Natural killer cell (primary cell): ENCODE measurements at regions of chr2 and their contacts with region 1.

Region 1: GRCh38 chr2:202265467-202266277 is at the start of gene NOP58:
- DNase-seq: peak; percentile 84 to 97
- ATAC-seq: peak; percentile 82 to 94 (median 90)
- H3K4me3 ChIP-seq: peak within 1 kb of the TSS; percentile 80
- H3K4me3 Mint-ChIP-seq: peak within 1 kb of the TSS; percentile 81
- H3K27ac ChIP-seq: peak within 1 kb of the TSS; percentile 99
- H3K27ac Mint-ChIP-seq: peak within 1 kb of the TSS; percentile 73 to 80
- H3K4me1 ChIP-seq: peaks cover 24% of the 10 kb centered on the region
- H3K4me1 Mint-ChIP-seq: peaks cover 7 to 16% of the 10 kb centered on the region in 2 donors
- H3K27me3 ChIP-seq: no peaks in the 10 kb centered on the region
- H3K27me3 Mint-ChIP-seq: no peaks in the 10 kb centered on the region
- CTCF ChIP-seq: no peak
- total RNA-seq, gene NOP58: 122 to 155 (median 124) TPM

Region 2: DNA sequence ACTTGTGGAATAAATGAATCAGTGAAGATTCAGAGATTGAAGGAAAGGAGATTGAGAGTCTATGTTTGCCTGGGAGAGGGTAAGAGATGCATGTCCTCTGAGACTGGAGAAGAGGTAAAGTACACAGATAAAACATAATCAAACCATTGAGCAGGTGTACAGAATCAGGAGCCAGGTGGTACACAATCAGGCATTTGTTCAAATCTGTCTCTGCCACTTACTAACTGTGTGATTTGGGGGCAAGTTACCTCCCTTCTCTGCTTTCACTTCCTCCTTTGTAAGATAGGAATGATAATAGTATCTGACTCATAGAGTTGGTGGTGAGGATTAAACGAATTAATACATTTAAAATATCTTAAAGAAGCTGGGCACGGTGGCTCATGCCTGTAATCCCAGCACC is 365.3 kb before region 1 on chr2:
- intact Hi-C with region 1: no loop called
- DNase-seq: no peak
- ATAC-seq: no peak
- H3K4me3 ChIP-seq: no peak overlapping the region
- H3K4me3 Mint-ChIP-seq: no peak overlapping the region
- H3K27ac ChIP-seq: no peak overlapping the region
- H3K27ac Mint-ChIP-seq: no peak overlapping the region
- H3K4me1 ChIP-seq: peaks cover 5% of the 10 kb centered on the region
- H3K4me1 Mint-ChIP-seq: no peaks in the 10 kb centered on the region
- H3K27me3 ChIP-seq: no peaks in the 10 kb centered on the region
- H3K27me3 Mint-ChIP-seq: peaks cover 24% of the 10 kb centered on the region in 2 donors
- CTCF ChIP-seq: no peak

Region 3: GRCh38 chr2:202238234-202239197 is 27.2 kb before region 1 on chr2 and contains the start of gene SUMO1:
- intact Hi-C with region 1: loop called (anchors 1 kb)
- DNase-seq: peak; percentile 83 to 96
- ATAC-seq: peak; percentile 94 to 96 (median 94)
- H3K4me3 ChIP-seq: peak within 1 kb of the TSS; percentile 94
- H3K4me3 Mint-ChIP-seq: peak within 1 kb of the TSS; percentile 99
- H3K27ac ChIP-seq: peak within 1 kb of the TSS; percentile 88
- H3K27ac Mint-ChIP-seq: peak within 1 kb of the TSS; percentile 90 to 96
- H3K4me1 ChIP-seq: peaks cover 19% of the 10 kb centered on the region
- H3K4me1 Mint-ChIP-seq: peaks cover 14 to 20% of the 10 kb centered on the region in 2 donors
- H3K27me3 ChIP-seq: no peaks in the 10 kb centered on the region
- H3K27me3 Mint-ChIP-seq: no peaks in the 10 kb centered on the region
- CTCF ChIP-seq: no peak
- total RNA-seq, gene SUMO1: 70.1 to 84.1 (median 70.7) TPM

Region 4: DNA sequence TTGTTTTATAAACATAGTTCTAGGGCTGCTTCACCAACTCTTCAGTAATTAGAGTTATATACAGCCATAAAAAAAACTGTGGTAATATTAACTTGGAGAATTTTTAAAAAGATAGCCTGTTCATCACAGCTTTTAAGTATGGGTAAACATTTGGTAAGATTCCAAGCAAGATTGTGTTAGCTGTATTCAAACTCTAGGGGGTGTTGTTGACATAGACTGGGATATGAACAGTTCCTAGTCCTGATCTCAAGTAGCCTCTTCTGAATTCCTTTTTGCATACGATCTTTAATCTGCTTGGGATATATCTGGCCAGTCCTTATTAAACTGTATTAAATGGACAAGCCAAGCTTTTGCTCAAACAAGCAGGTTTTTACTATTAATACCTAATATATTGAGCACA is 13.3 kb after region 1 on chr2:
- intact Hi-C with region 1: loop called (anchors 2 kb)
- DNase-seq: peak in 1 of 2 donors; percentile 36
- ATAC-seq: peak in 1 of 3 donors; percentile 45
- H3K4me3 ChIP-seq: no peak overlapping the region
- H3K4me3 Mint-ChIP-seq: no peak overlapping the region
- H3K27ac ChIP-seq: no peak overlapping the region
- H3K27ac Mint-ChIP-seq: peak overlapping the region in 1 of 2 donors; percentile 65
- H3K4me1 ChIP-seq: no peaks in the 10 kb centered on the region
- H3K4me1 Mint-ChIP-seq: peaks cover 9 to 10% of the 10 kb centered on the region in 2 donors
- H3K27me3 ChIP-seq: no peaks in the 10 kb centered on the region
- H3K27me3 Mint-ChIP-seq: no peaks in the 10 kb centered on the region
- CTCF ChIP-seq: no peak

Region 5: DNA sequence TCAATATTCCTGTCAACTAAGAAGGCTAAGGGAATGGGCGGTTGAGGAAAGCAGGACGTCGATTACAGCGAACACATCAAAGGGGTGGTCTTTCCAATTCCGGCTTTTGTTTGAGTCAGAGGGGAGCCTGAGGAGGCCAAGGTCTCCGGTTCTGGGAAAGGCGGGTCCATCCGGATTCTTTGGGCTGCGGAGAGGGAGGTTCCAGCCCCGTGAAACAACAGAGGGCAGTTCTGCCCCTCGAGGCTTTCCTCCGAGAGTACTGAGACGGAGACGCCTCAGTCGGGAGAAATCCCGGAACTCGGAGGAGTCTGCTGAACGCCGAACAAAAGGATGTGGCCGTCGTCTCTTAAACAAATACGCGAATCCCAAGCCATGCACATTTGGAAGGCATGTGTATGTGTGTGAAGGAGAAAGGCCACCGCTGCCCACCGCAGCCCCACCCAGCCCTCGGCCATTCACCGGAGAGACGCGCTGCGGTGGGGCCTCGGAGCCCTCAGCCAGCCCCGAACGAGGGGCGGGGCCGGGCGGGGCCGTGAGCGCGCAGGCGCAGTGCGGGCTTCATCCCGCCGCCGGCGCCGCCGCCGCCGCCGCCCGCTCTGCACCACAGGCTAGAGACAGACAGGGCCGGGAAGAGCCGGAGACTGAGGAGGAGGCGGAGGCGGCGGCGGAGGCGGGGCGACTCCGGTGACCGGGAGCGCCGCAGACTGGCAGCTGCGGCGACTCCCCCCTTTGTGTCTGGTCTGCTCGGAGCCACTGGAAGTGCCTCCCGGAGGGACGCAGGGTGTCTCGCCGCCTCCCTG is 110.1 kb after region 1 on chr2 and contains the start of gene BMPR2:
- intact Hi-C with region 1: loop called (anchors 10 kb)
- DNase-seq: peak; percentile 79 to 90
- ATAC-seq: peak; percentile 78 to 84 (median 82)
- H3K4me3 ChIP-seq: peak within 1 kb of the TSS; percentile 72
- H3K4me3 Mint-ChIP-seq: peak within 1 kb of the TSS; percentile 93
- H3K27ac ChIP-seq: peak within 1 kb of the TSS; percentile 49
- H3K27ac Mint-ChIP-seq: peak within 1 kb of the TSS; percentile 72 to 73
- H3K4me1 ChIP-seq: peaks cover 12% of the 10 kb centered on the region
- H3K4me1 Mint-ChIP-seq: peaks cover 39 to 43% of the 10 kb centered on the region in 2 donors
- H3K27me3 ChIP-seq: no peaks in the 10 kb centered on the region
- H3K27me3 Mint-ChIP-seq: no peaks in the 10 kb centered on the region
- CTCF ChIP-seq: no peak
- total RNA-seq, gene BMPR2: 17.8 to 25.5 (median 23.2) TPM

Region 6: DNA sequence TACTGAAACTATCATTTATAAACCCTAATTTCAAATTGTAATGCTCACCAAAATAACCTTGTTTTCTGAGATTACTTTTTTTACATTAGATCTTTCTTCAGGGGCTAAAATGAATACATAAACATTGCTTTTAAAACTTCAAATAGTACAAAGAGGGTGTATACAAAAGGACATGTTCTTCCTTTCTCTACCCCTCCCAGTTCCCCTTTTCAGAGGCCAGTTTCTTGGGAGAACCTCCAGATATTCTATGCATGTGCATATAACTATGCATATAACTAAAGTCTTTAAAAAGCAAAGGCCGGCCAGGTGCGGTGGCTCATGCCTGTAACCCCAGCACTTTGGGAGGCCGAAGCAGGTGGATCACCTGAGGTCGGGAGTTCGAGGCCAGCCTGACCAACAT is 358.5 kb after region 1 on chr2:
- intact Hi-C with region 1: no loop called
- DNase-seq: no peak
- ATAC-seq: no peak
- H3K4me3 ChIP-seq: no peak overlapping the region
- H3K4me3 Mint-ChIP-seq: no peak overlapping the region
- H3K27ac ChIP-seq: no peak overlapping the region
- H3K27ac Mint-ChIP-seq: no peak overlapping the region
- H3K4me1 ChIP-seq: no peaks in the 10 kb centered on the region
- H3K4me1 Mint-ChIP-seq: no peaks in the 10 kb centered on the region
- H3K27me3 ChIP-seq: no peaks in the 10 kb centered on the region
- H3K27me3 Mint-ChIP-seq: no peaks in the 10 kb centered on the region
- CTCF ChIP-seq: no peak

Region 7: DNA sequence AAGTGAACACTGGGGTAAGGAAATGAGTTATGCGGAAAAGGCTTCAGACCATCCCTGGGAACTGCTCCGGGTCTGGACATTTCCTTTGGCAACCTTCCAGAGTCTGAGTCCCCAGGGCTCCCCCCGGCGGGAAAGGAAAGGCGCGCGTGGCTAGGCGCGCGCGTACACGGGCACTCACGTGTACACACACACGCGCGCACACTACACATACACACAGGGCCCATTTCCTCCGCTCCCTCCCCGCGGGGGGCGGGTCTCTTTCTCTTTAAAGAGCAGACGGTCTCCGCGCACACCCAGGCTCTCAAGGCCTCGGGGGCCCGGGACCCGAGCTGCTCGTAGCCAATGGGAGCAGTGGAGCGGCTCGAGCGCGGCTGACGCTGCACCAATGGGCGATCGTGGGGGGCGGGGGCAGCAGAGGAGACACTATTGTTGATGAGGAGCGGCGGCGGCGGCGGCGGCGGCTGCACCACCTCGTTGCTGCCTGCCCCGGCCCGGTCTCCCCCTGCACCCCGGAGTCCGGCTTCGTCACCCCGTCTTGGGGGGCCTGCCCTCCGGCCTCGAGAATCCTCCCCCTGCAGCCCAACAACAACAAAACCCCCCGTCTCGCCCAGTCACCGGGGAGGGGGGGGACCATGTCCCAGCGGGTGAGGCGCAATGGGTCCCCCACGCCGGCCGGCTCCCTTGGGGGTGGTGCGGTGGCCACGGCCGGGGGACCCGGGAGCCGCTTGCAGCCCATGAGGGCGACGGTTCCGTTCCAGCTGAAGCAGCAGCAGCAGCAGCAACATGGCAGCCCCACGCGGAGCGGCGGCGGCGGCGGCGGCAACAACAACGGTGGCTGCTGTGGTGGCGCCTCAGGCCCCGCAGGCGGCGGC is 369.1 kb after region 1 on chr2 and contains the start of gene FAM117B:
- intact Hi-C with region 1: loop called (anchors 10 kb)
- DNase-seq: peak; percentile 94 to 98
- ATAC-seq: peak; percentile 90 to 96 (median 92)
- H3K4me3 ChIP-seq: peak within 1 kb of the TSS; percentile 79
- H3K4me3 Mint-ChIP-seq: peak within 1 kb of the TSS; percentile 95
- H3K27ac ChIP-seq: peak within 1 kb of the TSS; percentile 79
- H3K27ac Mint-ChIP-seq: peak within 1 kb of the TSS; percentile 93 to 98
- H3K4me1 ChIP-seq: peaks cover 13% of the 10 kb centered on the region
- H3K4me1 Mint-ChIP-seq: peaks cover 18 to 25% of the 10 kb centered on the region in 2 donors
- H3K27me3 ChIP-seq: no peaks in the 10 kb centered on the region
- H3K27me3 Mint-ChIP-seq: no peaks in the 10 kb centered on the region
- CTCF ChIP-seq: no peak
- total RNA-seq, gene FAM117B: 11.6 to 14.2 (median 13.1) TPM